ENCODE measurements at regions of chr9 and their contacts with region 1.

Region 1: GRCh38 chr9:130570200-130570599 is 9.2 kb upstream of the FUBP3 start:
- DNase-seq: no peak

Region 2: DNA sequence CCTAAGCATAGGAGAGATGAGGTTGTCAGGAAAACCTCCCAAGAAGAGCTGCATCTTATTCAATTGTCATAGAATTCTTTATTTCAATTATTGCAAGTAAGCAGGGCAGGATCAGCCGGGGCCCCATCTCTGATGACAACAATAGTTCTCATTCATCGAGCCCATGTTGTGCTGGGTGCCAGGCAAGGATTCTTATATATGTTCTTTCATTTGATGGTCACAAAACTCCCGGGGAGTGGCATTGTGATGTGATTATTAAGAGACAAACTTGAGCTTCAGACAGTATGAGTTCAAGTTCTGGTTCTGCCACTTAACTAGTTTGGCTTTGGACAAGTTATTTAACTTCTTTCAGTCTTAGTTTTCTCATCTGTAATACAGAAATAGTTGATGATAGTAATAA is 17.7 kb after region 1 on chr9:
- intact Hi-C with region 1: loop called (anchors 1 kb)
- DNase-seq: peak in 1 of 10 donors; percentile 19

Measured in posterior cingulate gyrus (tissue), 11 donors.